Activated T-helper 2 cell treated with anti-CD3 and anti-CD28 coated beads, Interferon-gamma antibody, Interleukin-2, Interleukin-4, amounts not matched to agents 10 μg/mL and 5 μg/mL and 100 μg/mL, durations not matched to agents 14 hours and 24 hours and 36 hours (primary cell): ENCODE measurements at regions of chr3 and their contacts with region 1.

Region 1: GRCh38 chr3:36900474-36901443 is 44.1 kb downstream of the TRANK1 start:
- DNase-seq: no peak
- H3K4me3 Mint-ChIP-seq: peak overlapping the region; percentile 35
- H3K27ac Mint-ChIP-seq: peak overlapping the region; percentile 5
- H3K4me1 Mint-ChIP-seq: peaks cover 33% of the 10 kb centered on the region
- H3K27me3 Mint-ChIP-seq: peaks cover 3% of the 10 kb centered on the region

Region 2: GRCh38 chr3:36843065-36844051 is 57.4 kb before region 1 on chr3:
- intact Hi-C with region 1: no loop called
- DNase-seq: peak; percentile 36
- H3K4me3 Mint-ChIP-seq: peak overlapping the region; percentile 6
- H3K27ac Mint-ChIP-seq: no peak overlapping the region
- H3K4me1 Mint-ChIP-seq: peaks cover 30% of the 10 kb centered on the region
- H3K27me3 Mint-ChIP-seq: peaks cover 2% of the 10 kb centered on the region

Region 3: GRCh38 chr3:36918050-36918449 is 17.3 kb after region 1 on chr3:
- intact Hi-C with region 1: loop called (anchors 2 kb)
- DNase-seq: no peak
- H3K4me3 Mint-ChIP-seq: peak overlapping the region; percentile 66
- H3K27ac Mint-ChIP-seq: peak overlapping the region; percentile 62
- H3K4me1 Mint-ChIP-seq: peaks cover 27% of the 10 kb centered on the region
- H3K27me3 Mint-ChIP-seq: peaks cover 3% of the 10 kb centered on the region

Region 4: GRCh38 chr3:36928220-36928619 is 27.5 kb after region 1 on chr3:
- intact Hi-C with region 1: no loop called
- DNase-seq: no peak
- H3K4me3 Mint-ChIP-seq: no peak overlapping the region
- H3K27ac Mint-ChIP-seq: no peak overlapping the region
- H3K4me1 Mint-ChIP-seq: no peaks in the 10 kb centered on the region
- H3K27me3 Mint-ChIP-seq: peaks cover 16% of the 10 kb centered on the region